ENCODE measurements at regions of chr19 and their contacts with region 1.

Region 1: GRCh38 chr19:1438035-1438932 is at the start of gene RPS15:
- DNase-seq: peak; percentile 98
- H3K4me3 ChIP-seq: peak within 1 kb of the TSS; percentile 75 to 89 (median 85)
- H3K27ac ChIP-seq: peak within 1 kb of the TSS; percentile 89
- H3K4me1 ChIP-seq: peaks cover 6% of the 10 kb centered on the region
- H3K27me3 ChIP-seq: no peaks in the 10 kb centered on the region
- CTCF ChIP-seq: peak; percentile 96 to 98
- POLR2A ChIP-seq: peak; percentile 99
- total RNA-seq, gene RPS15: 1,260 and 1,287 TPM in 2 replicates

Region 2: DNA sequence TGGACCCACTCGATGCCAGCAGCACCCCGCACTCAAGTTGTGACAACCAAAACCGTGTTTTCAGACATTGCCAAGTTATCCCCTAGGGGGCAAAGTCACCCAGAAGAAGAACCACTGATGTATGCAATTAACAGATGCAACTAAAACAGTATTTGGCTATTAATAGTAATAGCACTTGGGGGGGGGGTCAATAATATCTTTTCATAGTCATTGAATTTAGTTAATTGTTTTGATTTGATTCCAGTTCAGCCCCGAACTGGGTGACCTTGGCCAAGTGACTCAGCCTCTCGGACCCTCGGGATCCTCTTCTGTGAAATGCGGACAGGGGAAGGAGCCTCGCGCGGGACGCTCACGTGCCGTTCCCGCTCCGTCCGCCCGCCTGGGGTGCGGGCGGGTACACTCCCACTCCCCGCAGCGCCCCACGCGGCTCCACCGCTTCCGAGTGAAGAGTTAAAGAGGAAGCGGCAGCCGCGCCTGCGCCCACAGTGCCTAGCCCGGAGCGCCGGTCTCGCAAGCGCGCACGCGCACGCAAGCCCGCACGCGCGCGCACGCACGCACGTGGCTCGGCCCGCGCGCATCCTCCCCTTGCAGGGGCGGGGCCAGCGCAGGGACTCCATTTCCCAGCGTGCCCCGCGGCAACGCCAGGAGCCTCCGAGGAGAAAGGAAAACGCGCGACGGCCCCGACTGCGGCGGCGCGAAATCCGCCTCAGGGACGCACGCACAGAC is 31.3 kb before region 1 on chr19:
- CTCF ChIA-PET with region 1: interaction called, 3 read pairs
- POLR2A ChIA-PET with region 1: interaction called, 4 read pairs
- dilution Hi-C with region 1: no loop called
- intact Hi-C with region 1: loop called (anchors 1 kb)
- DNase-seq: peak; percentile 99
- H3K4me3 ChIP-seq: peak overlapping the region; percentile 53 to 61 (median 57)
- H3K27ac ChIP-seq: peak overlapping the region; percentile 42
- H3K4me1 ChIP-seq: peaks cover 26% of the 10 kb centered on the region
- H3K27me3 ChIP-seq: no peaks in the 10 kb centered on the region
- CTCF ChIP-seq: peak in 1 of 2 donors; percentile 55
- POLR2A ChIP-seq: peak; percentile 81

Region 3: DNA sequence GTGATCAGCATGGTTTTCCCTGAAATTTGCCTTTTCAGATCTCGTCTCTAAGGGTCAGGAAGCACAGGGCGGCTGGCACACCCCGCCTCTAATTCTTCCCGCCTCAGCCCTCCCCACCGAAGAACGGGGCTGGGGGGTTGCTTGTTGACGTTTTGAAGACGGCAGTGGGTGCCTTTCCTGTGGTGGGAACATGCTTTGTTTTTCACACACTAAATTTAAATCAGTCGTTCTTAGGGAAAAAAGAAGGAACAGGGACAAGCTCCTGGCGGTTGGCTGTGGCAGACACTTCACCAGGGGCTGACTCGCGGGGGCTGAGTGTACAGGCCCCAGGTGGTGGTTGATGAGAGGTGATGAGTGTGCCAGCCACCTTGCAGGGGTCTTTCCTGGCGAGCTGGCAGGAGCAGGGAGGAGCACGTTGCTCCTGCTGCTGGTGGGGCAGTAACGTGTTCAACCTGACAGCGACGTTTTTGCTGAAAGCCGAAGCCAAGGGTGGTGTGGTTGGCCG is 22.5 kb before region 1 on chr19:
- CTCF ChIA-PET with region 1: interaction called, 3 read pairs
- POLR2A ChIA-PET with region 1: interaction called, 4 read pairs
- dilution Hi-C with region 1: no loop called
- intact Hi-C with region 1: loop called (anchors 2 kb)
- DNase-seq: no peak
- H3K4me3 ChIP-seq: no peak overlapping the region
- H3K27ac ChIP-seq: peak overlapping the region; percentile 71
- H3K4me1 ChIP-seq: peaks cover 19% of the 10 kb centered on the region
- H3K27me3 ChIP-seq: no peaks in the 10 kb centered on the region
- CTCF ChIP-seq: no peak
- POLR2A ChIP-seq: no peak